Ascending aorta (tissue), 2 donors: ENCODE measurements at regions of chr11 and their contacts with region 1.

Region 1: DNA sequence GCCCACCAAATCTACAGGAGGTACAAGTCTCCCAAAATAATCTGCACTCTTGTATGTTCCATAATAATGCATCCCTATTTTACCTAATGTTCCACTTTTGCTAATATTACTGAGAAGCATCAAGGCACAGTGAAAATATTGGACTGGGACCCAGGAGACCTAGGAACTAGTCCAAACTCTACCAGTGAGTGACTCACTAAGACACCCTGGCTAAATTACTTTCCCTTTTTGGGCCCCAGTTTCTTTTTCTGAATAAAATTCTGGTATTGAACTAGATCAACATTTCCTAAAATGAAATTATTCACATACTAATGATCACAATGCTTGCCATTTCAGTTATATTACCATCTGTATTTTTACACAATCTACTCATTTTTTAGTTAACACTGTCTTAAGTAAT is 19.6 kb downstream of the THAP12 start:
- DNase-seq: no peak
- H3K4me3 ChIP-seq: peak overlapping the region in 1 of 2 donors; percentile 27
- H3K27ac ChIP-seq: peak overlapping the region; percentile 54 to 74
- H3K4me1 ChIP-seq: peaks cover 5 to 9% of the 10 kb centered on the region in 2 donors
- H3K27me3 ChIP-seq: no peaks in the 10 kb centered on the region
- CTCF ChIP-seq: no peak

Region 2: GRCh38 chr11:76506833-76507232 is 145.5 kb after region 1 on chr11:
- intact Hi-C with region 1: loop called (anchors 5 kb)
- DNase-seq: no peak
- H3K4me3 ChIP-seq: no peak overlapping the region
- H3K27ac ChIP-seq: no peak overlapping the region
- H3K4me1 ChIP-seq: peaks cover 0 to 5% of the 10 kb centered on the region in 2 donors
- H3K27me3 ChIP-seq: no peaks in the 10 kb centered on the region
- CTCF ChIP-seq: no peak